Activated CD4-positive, alpha-beta memory T cell treated with anti-CD3 and anti-CD28 coated beads for 36 hours (primary cell): ENCODE measurements at regions of chr14 and their contacts with region 1.

Region 1: DNA sequence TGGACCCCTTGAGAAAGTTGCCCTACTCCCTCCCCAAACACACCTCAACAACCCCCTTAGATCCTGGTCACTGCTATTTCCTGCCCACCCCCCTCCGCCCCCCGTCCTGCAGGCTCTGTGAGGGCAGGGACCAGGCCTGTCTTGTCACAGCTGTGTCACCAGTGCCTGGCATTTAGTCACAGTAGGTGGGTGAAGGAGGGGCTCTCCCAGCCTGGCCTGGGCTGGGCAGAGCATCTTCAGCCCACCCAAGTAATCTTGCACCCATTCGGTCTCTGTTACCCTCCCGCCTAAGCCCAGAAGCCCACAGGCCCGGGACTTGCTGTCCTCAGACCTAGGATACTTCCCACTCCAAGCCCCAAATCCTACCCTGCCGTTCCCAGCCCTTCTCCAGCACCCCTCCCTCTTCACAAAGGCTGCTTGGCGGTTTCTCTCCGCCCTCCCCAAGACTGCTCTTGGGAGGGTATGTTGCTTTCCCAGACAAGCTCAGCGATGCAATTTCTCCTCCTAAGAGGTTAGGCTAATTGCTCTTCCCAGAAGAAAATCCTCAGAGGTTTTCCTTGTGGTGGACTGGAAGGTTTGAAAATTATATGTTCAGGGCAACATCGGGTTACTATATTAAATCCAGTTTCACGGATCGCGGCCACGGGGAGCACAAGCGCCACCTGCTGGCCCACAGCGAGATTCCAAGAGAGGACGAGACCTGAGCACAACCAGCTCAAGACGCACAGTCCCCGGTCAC is 50.8 kb upstream of the ZFP36L1 start:
- DNase-seq: peak; percentile 84
- H3K4me3 Mint-ChIP-seq: peak overlapping the region; percentile 2
- H3K27ac Mint-ChIP-seq: no peak overlapping the region
- H3K4me1 Mint-ChIP-seq: peaks cover 19% of the 10 kb centered on the region
- H3K27me3 Mint-ChIP-seq: peaks cover 2% of the 10 kb centered on the region

Region 2: GRCh38 chr14:67934008-67934481 is 909.6 kb before region 1 on chr14:
- CTCF ChIA-PET with region 1: interaction called, 28 read pairs
- POLR2A ChIA-PET with region 1: no interaction called
- intact Hi-C with region 1: no loop called
- DNase-seq: no peak
- H3K4me3 Mint-ChIP-seq: no peak overlapping the region
- H3K27ac Mint-ChIP-seq: no peak overlapping the region
- H3K4me1 Mint-ChIP-seq: peaks cover 5% of the 10 kb centered on the region
- H3K27me3 Mint-ChIP-seq: no peaks in the 10 kb centered on the region

Region 3: GRCh38 chr14:68232300-68233055 is 611.2 kb before region 1 on chr14:
- CTCF ChIA-PET with region 1: interaction called, 12 read pairs
- POLR2A ChIA-PET with region 1: no interaction called
- intact Hi-C with region 1: no loop called
- DNase-seq: peak; percentile 64
- H3K4me3 Mint-ChIP-seq: no peak overlapping the region
- H3K27ac Mint-ChIP-seq: no peak overlapping the region
- H3K4me1 Mint-ChIP-seq: peaks cover 22% of the 10 kb centered on the region
- H3K27me3 Mint-ChIP-seq: no peaks in the 10 kb centered on the region

Region 4: GRCh38 chr14:68824517-68825347 is 18.9 kb before region 1 on chr14:
- CTCF ChIA-PET with region 1: interaction called, 107 read pairs
- POLR2A ChIA-PET with region 1: no interaction called
- intact Hi-C with region 1: loop called (anchors 1 kb)
- DNase-seq: peak; percentile 66
- H3K4me3 Mint-ChIP-seq: no peak overlapping the region
- H3K27ac Mint-ChIP-seq: no peak overlapping the region
- H3K4me1 Mint-ChIP-seq: peaks cover 25% of the 10 kb centered on the region
- H3K27me3 Mint-ChIP-seq: no peaks in the 10 kb centered on the region

Region 5: DNA sequence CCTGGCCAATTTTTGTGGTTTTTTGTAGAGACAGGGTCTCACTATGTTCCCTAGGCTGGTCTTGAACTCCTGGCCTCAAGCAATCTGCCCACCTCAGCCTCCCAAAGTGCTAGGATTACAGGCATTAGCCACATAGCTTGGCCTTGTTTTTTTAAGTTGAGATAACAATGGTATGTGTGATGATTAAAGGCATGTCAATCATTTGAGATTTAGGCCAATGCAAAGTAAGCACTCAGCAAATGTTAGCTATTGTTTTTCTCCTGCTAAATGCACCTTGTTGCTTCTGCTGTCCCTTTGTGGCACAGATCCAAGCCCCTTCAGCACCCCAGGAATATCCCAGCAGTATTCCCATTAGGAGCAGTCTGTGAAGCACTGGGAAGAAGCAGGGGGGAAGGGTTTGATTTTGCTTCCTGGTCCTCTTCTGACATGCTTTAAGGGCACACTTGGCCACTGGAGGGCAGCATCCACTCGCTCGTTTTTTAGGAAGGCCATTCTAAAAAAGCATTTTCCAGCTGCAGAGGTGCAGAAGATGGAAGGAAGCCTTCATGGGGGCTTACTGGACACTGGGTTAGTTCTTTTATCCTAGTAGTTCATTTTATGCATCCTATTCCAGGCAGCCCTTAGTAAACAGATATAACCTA is 19.4 kb after region 1 on chr14:
- CTCF ChIA-PET with region 1: interaction called, 13 read pairs
- POLR2A ChIA-PET with region 1: no interaction called
- intact Hi-C with region 1: no loop called
- DNase-seq: peak; percentile 82
- H3K4me3 Mint-ChIP-seq: no peak overlapping the region
- H3K27ac Mint-ChIP-seq: no peak overlapping the region
- H3K4me1 Mint-ChIP-seq: no peaks in the 10 kb centered on the region
- H3K27me3 Mint-ChIP-seq: no peaks in the 10 kb centered on the region